ENCODE measurements at regions of chr2 and their contacts with region 1.

Region 1: GRCh38 chr2:108637304-108637669 is 82.0 kb upstream of the RANBP2 start:
- DNase-seq: no peak
- H3K4me3 Mint-ChIP-seq: no peak overlapping the region
- H3K27ac Mint-ChIP-seq: no peak overlapping the region
- H3K4me1 Mint-ChIP-seq: peaks cover 77% of the 10 kb centered on the region
- H3K27me3 Mint-ChIP-seq: no peaks in the 10 kb centered on the region

Region 2: DNA sequence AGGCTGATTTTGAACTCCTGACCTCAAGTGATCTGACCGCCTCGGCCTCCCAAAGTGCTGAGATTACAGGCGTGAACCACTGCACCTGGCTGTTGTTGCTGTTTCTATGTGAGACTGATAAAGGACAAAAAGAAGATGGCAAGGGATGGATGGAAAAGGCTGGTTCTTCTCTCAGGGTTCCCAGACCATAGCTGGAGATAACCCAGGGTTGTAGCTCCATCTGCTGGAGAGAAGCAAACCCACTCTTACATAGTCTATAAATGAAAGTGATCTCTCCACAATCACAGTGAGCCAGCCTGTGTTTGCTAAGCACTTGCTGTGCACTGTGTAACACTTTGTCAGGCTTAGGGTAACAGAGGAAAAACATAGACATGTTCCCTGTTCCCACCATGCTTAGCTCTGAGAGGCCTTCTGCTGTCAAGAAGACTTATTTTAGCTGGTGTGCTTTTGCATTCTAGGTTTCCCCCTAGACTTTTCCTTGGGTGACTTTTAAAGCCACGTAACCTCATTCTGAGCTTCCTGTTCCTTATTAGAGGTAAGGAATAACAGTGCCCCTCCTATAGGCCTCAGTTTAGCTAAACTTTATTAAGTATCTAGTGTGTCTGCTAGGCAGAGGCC is 53.3 kb before region 1 on chr2:
- CTCF ChIA-PET with region 1: interaction called, 24 read pairs
- POLR2A ChIA-PET with region 1: no interaction called
- DNase-seq: peak; percentile 65
- H3K4me3 Mint-ChIP-seq: no peak overlapping the region
- H3K27ac Mint-ChIP-seq: no peak overlapping the region
- H3K4me1 Mint-ChIP-seq: peaks cover 45% of the 10 kb centered on the region
- H3K27me3 Mint-ChIP-seq: no peaks in the 10 kb centered on the region

Region 3: GRCh38 chr2:108594132-108594981 is 42.9 kb before region 1 on chr2:
- CTCF ChIA-PET with region 1: interaction called, 21 read pairs
- POLR2A ChIA-PET with region 1: interaction called, 6 read pairs
- DNase-seq: no peak
- H3K4me3 Mint-ChIP-seq: peak overlapping the region; percentile 2
- H3K27ac Mint-ChIP-seq: peak overlapping the region; percentile 38
- H3K4me1 Mint-ChIP-seq: peaks cover 55% of the 10 kb centered on the region
- H3K27me3 Mint-ChIP-seq: no peaks in the 10 kb centered on the region

Region 4: GRCh38 chr2:108607706-108608301 is 29.5 kb before region 1 on chr2:
- CTCF ChIA-PET with region 1: interaction called, 365 read pairs
- POLR2A ChIA-PET with region 1: interaction called, 279 read pairs
- DNase-seq: peak; percentile 65
- H3K4me3 Mint-ChIP-seq: no peak overlapping the region
- H3K27ac Mint-ChIP-seq: no peak overlapping the region
- H3K4me1 Mint-ChIP-seq: peaks cover 76% of the 10 kb centered on the region
- H3K27me3 Mint-ChIP-seq: no peaks in the 10 kb centered on the region

Region 5: GRCh38 chr2:108621087-108621559 is 16.2 kb before region 1 on chr2:
- CTCF ChIA-PET with region 1: interaction called, 365 read pairs
- POLR2A ChIA-PET with region 1: interaction called, 279 read pairs
- DNase-seq: peak; percentile 86
- H3K4me3 Mint-ChIP-seq: peak overlapping the region; percentile 81
- H3K27ac Mint-ChIP-seq: peak overlapping the region; percentile 94
- H3K4me1 Mint-ChIP-seq: peaks cover 76% of the 10 kb centered on the region
- H3K27me3 Mint-ChIP-seq: no peaks in the 10 kb centered on the region